Esophagus muscularis mucosa (tissue), 4 donors: ENCODE measurements at regions of chr9 and their contacts with region 1.

Region 1: DNA sequence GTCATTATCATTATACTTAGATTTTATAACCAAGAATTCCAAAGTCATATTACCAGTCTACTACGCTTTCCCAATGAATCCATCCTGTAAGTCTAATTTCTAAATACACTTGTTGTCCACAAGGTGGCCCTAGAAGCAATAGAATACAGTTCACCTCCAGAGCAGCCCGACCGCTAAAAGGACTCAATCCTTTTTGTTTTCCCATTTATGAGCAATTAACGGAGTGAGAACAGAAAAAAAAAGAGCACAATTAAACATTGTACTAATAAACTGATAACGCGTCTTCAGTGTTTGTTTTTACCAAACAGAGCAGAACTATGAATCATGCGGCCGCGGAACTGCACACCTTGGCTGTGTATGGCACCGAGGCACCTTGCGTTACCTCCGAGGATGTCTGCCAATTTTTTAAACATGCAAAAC is 160.7 kb upstream of the DAPK1 start:
- DNase-seq: peak; percentile 82
- H3K4me3 ChIP-seq: peak overlapping the region; percentile 37 to 55 (median 50)
- H3K27ac ChIP-seq: peak overlapping the region in 2 of 4 donors; percentile 5 to 48
- H3K4me1 ChIP-seq: peaks cover 12 to 18% (median 17%) of the 10 kb centered on the region in 4 donors
- H3K27me3 ChIP-seq: no peaks in the 10 kb centered on the region
- CTCF ChIP-seq: peak; percentile 69 to 75 (median 70)
- EP300 ChIP-seq: no peak
- POLR2A ChIP-seq: no peak

Region 2: DNA sequence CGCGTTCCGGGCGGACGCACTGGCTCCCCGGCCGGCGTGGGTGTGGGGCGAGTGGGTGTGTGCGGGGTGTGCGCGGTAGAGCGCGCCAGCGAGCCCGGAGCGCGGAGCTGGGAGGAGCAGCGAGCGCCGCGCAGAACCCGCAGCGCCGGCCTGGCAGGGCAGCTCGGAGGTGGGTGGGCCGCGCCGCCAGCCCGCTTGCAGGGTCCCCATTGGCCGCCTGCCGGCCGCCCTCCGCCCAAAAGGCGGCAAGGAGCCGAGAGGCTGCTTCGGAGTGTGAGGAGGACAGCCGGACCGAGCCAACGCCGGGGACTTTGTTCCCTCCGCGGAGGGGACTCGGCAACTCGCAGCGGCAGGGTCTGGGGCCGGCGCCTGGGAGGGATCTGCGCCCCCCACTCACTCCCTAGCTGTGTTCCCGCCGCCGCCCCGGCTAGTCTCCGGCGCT is 160.7 kb after region 1 on chr9 and contains the start of gene DAPK1:
- intact Hi-C with region 1: loop called (anchors 2 kb)
- DNase-seq: no peak
- H3K4me3 ChIP-seq: peak within 1 kb of the TSS; percentile 77 to 98 (median 95)
- H3K27ac ChIP-seq: peak within 1 kb of the TSS; percentile 88 to 94 (median 93)
- H3K4me1 ChIP-seq: peaks cover 6 to 43% (median 37%) of the 10 kb centered on the region in 4 donors
- H3K27me3 ChIP-seq: peaks cover 0 to 4% (median 0%) of the 10 kb centered on the region in 4 donors
- CTCF ChIP-seq: peak; percentile 27 to 44 (median 31)
- EP300 ChIP-seq: no peak
- POLR2A ChIP-seq: peak; percentile 19
- total RNA-seq, gene DAPK1: 51.7 to 96.8 (median 80.7) TPM

Region 3: DNA sequence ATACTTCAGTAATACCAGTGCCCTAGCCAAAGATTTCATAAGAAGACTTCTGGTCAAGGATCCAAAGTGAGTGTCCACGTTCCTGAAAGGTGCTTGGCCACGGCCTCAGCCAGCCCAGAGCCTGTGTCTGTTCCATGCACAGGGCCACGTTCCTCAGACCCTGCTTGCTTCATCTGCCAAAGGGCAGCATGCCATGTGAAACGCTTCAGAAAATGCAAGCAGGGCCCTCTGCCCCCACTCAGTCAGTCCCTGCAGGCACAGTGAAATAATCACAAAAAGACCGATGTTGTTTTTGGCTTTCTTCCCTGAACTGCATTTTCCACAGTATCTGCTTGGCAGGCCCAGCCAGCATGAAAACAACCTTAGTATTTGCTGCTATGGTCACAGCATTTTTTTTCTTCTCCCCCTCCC is 303.5 kb after region 1 on chr9:
- intact Hi-C with region 1: loop called (anchors 5 kb)
- DNase-seq: no peak
- H3K4me3 ChIP-seq: no peak overlapping the region
- H3K27ac ChIP-seq: peak overlapping the region; percentile 53 to 72 (median 68)
- H3K4me1 ChIP-seq: peaks cover 5 to 64% (median 51%) of the 10 kb centered on the region in 4 donors
- H3K27me3 ChIP-seq: no peaks in the 10 kb centered on the region
- CTCF ChIP-seq: no peak
- EP300 ChIP-seq: no peak
- POLR2A ChIP-seq: no peak

Region 4: GRCh38 chr9:87662808-87663528 is 326.0 kb after region 1 on chr9:
- intact Hi-C with region 1: loop called (anchors 2 kb)
- DNase-seq: no peak
- H3K4me3 ChIP-seq: no peak overlapping the region
- H3K27ac ChIP-seq: no peak overlapping the region
- H3K4me1 ChIP-seq: peaks cover 0 to 27% (median 20%) of the 10 kb centered on the region in 4 donors
- H3K27me3 ChIP-seq: no peaks in the 10 kb centered on the region
- CTCF ChIP-seq: peak; percentile 64 to 74 (median 65)
- EP300 ChIP-seq: no peak
- POLR2A ChIP-seq: no peak

Region 5: GRCh38 chr9:87812375-87813118 is 475.6 kb after region 1 on chr9:
- intact Hi-C with region 1: loop called (anchors 10 kb)
- DNase-seq: no peak
- H3K4me3 ChIP-seq: no peak overlapping the region
- H3K27ac ChIP-seq: no peak overlapping the region
- H3K4me1 ChIP-seq: peaks cover 0 to 4% (median 1%) of the 10 kb centered on the region in 4 donors
- H3K27me3 ChIP-seq: no peaks in the 10 kb centered on the region
- CTCF ChIP-seq: peak; percentile 69 to 92 (median 72)
- EP300 ChIP-seq: no peak
- POLR2A ChIP-seq: no peak

Region 6: GRCh38 chr9:87950765-87951488 is 614.0 kb after region 1 on chr9:
- intact Hi-C with region 1: no loop called
- DNase-seq: no peak
- H3K4me3 ChIP-seq: no peak overlapping the region
- H3K27ac ChIP-seq: no peak overlapping the region
- H3K4me1 ChIP-seq: no peaks in the 10 kb centered on the region
- H3K27me3 ChIP-seq: peaks cover 0 to 15% (median 0%) of the 10 kb centered on the region in 4 donors
- CTCF ChIP-seq: peak in 2 of 3 experiments; percentile 23 to 34
- EP300 ChIP-seq: no peak
- POLR2A ChIP-seq: no peak